Psoas muscle (tissue), 8 donors: ENCODE measurements at regions of chr11 and their contacts with region 1.

Region 1: DNA sequence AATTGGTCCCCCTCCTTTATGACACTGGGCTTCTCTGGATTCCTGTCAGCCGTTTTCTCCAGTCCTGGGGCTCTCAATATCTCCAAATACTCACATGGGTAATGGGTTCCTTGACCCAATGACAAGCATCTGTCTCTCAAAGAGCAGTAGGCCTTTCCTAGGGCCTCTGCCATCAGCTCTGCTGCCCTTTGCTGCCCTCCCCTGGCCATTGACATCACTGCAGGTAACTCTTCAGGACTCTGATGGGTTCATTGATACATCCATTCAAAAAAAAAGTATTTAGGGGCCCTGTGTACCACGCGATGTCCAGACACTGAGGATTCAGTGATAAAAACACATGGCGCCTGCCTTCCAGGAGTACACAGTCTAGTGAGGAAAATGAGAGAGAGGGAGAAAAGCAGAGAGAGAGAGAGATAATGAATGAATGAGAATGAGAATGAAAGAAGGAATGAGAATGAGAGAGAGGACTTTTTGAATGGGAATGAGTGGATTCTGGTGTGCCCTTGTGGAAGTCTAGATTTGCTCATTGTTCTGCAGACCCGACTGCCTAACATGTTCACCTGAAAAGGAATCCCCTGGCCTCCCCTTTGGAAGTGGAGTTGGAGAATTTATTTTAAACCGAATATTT is 42.6 kb upstream of the OLFML1 start:
- DNase-seq: peak; percentile 67 to 81
- ATAC-seq: peak in 3 of 4 donors; percentile 70 to 87 (median 83)
- H3K4me3 ChIP-seq: no peak overlapping the region
- H3K27ac ChIP-seq: no peak overlapping the region
- H3K4me1 ChIP-seq: no peaks in the 10 kb centered on the region
- H3K27me3 ChIP-seq: no peaks in the 10 kb centered on the region
- CTCF ChIP-seq: peak; percentile 81

Region 2: GRCh38 chr11:7353100-7353499 is 89.6 kb before region 1 on chr11:
- intact Hi-C with region 1: loop called in 1 of 2 experiments (anchors 2 kb)
- DNase-seq: no peak
- ATAC-seq: no peak
- H3K4me3 ChIP-seq: no peak overlapping the region
- H3K27ac ChIP-seq: no peak overlapping the region
- H3K4me1 ChIP-seq: no peaks in the 10 kb centered on the region
- H3K27me3 ChIP-seq: no peaks in the 10 kb centered on the region
- CTCF ChIP-seq: peak; percentile 19

Region 3: DNA sequence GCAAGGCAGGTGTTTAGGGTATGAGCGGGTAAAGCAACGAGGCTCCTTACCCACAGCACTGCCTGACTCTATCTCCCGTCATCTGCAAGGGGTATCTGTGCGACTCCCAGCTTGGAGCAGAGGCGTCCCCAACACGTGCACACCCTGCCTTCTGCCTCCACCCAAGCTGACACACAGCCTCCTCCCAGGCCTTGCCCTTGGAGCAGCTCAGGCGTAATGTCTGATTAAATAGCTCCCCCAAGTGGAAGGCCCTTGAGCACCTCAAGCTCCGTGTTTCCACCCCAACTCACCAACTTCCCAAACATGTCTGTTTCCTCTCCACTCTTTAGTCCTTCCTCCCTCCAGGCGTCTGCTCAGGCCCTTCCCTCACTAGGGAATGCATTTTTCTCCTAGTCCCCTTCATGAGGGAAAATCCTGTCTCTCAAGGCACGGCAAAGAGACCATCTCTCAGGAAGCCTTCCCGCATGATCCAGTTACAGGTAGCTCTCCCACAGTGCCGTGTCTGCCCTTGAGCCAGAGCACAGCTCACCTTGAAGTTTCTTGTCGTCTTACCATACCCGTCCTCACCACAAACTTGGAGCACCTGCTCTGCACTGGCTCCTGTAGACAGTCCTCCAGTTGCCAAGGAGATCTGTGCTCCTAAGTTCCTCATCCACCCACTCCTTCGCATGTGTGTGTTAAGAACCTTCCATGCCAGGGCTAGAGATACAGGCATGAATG is 214.8 kb after region 1 on chr11:
- intact Hi-C with region 1: loop called in 1 of 2 experiments (anchors 10 kb)
- DNase-seq: peak; percentile 55 to 78
- ATAC-seq: peak; percentile 81 to 98 (median 95)
- H3K4me3 ChIP-seq: no peak overlapping the region
- H3K27ac ChIP-seq: no peak overlapping the region
- H3K4me1 ChIP-seq: no peaks in the 10 kb centered on the region
- H3K27me3 ChIP-seq: no peaks in the 10 kb centered on the region
- CTCF ChIP-seq: peak; percentile 43